Left lung (tissue), 14 donors: ENCODE measurements at regions of chr5 and their contacts with region 1.

Region 1: GRCh38 chr5:126354012-126354857 is 69.0 kb upstream of the GRAMD2B start:
- DNase-seq: peak in 2 of 4 donors; percentile 64 to 75
- ATAC-seq: peak; percentile 85
- H3K4me3 ChIP-seq: no peak overlapping the region
- H3K27ac ChIP-seq: peak overlapping the region; percentile 3 to 65
- H3K4me1 ChIP-seq: peaks cover 5 to 12% of the 10 kb centered on the region in 2 donors
- H3K27me3 ChIP-seq: no peaks in the 10 kb centered on the region
- CTCF ChIP-seq: peak; percentile 17 to 47

Region 2: GRCh38 chr5:125976421-125977000 is 377.7 kb before region 1 on chr5:
- intact Hi-C with region 1: no loop called
- DNase-seq: no peak
- ATAC-seq: no peak
- H3K4me3 ChIP-seq: no peak overlapping the region
- H3K27ac ChIP-seq: no peak overlapping the region
- H3K4me1 ChIP-seq: no peaks in the 10 kb centered on the region
- H3K27me3 ChIP-seq: no peaks in the 10 kb centered on the region
- CTCF ChIP-seq: no peak

Region 3: GRCh38 chr5:126536874-126537273 is 182.6 kb after region 1 on chr5:
- intact Hi-C with region 1: loop called in 1 of 2 experiments (anchors 5 kb)
- DNase-seq: no peak
- ATAC-seq: no peak
- H3K4me3 ChIP-seq: no peak overlapping the region
- H3K27ac ChIP-seq: no peak overlapping the region
- H3K4me1 ChIP-seq: peaks cover 0 to 15% of the 10 kb centered on the region in 2 donors
- H3K27me3 ChIP-seq: no peaks in the 10 kb centered on the region
- CTCF ChIP-seq: no peak